CD4-positive, alpha-beta memory T cell (primary cell): ENCODE measurements at regions of chr1 and their contacts with region 1.

Region 1: GRCh38 chr1:207321079-207321789 is at the start of gene CD55:
- DNase-seq: peak; percentile 99 to 100 (median 100)
- H3K4me3 ChIP-seq: peak within 1 kb of the TSS; percentile 98 to 99
- H3K4me3 Mint-ChIP-seq: peak within 1 kb of the TSS; percentile 94 to 99 (median 96)
- H3K27ac ChIP-seq: peak within 1 kb of the TSS; percentile 92
- H3K27ac Mint-ChIP-seq: peak within 1 kb of the TSS; percentile 98 to 100 (median 100)
- H3K4me1 ChIP-seq: peaks cover 44% of the 10 kb centered on the region
- H3K4me1 Mint-ChIP-seq: peaks cover 24 to 56% (median 35%) of the 10 kb centered on the region in 4 donors
- H3K27me3 ChIP-seq: no peaks in the 10 kb centered on the region
- H3K27me3 Mint-ChIP-seq: peaks cover 0 to 5% of the 10 kb centered on the region in 2 donors
- total RNA-seq, gene CD55: 69.0 to 77.3 TPM

Region 2: DNA sequence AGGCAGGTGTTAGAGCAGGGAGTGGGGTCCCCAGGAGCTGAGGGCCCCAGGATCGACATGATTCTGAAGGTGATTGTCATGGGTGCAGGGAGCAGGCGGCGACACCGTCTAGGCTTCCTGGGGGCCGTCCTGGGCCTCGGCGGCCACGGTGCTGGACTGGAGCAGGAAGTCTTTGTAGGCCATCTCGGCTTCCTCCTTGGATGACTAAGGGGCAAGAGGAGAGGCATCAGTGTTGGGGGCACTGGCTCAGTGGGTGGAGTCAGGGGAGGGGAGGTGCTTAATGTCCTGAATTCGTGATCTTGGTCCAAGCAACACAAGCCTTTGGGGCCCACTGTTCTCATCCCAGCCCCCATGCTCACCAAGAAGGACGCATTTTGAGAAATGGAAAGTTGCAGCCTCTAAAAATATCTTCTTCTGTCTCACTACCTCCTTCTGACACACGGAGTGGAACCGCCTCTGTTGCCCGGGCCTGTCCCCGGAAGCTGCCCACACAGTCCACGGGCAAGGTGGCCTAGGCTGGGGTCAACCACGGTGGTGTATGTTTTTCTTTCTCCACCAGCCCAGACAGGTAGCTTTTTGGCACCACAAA is 390.9 kb before region 1 on chr1:
- CTCF ChIA-PET with region 1: no interaction called
- POLR2A ChIA-PET with region 1: no interaction called
- intact Hi-C with region 1: no loop called
- DNase-seq: no peak
- H3K4me3 ChIP-seq: no peak overlapping the region
- H3K4me3 Mint-ChIP-seq: peak overlapping the region; percentile 2 to 70 (median 54)
- H3K27ac ChIP-seq: no peak overlapping the region
- H3K27ac Mint-ChIP-seq: peak overlapping the region; percentile 81 to 93 (median 88)
- H3K4me1 ChIP-seq: peaks cover 39% of the 10 kb centered on the region
- H3K4me1 Mint-ChIP-seq: peaks cover 25 to 55% (median 34%) of the 10 kb centered on the region in 4 donors
- H3K27me3 ChIP-seq: no peaks in the 10 kb centered on the region
- H3K27me3 Mint-ChIP-seq: no peaks in the 10 kb centered on the region

Region 3: GRCh38 chr1:207282058-207282457 is 39.2 kb before region 1 on chr1:
- CTCF ChIA-PET with region 1: interaction called, 3 read pairs
- POLR2A ChIA-PET with region 1: interaction called, 29 read pairs
- intact Hi-C with region 1: no loop called
- DNase-seq: no peak
- H3K4me3 ChIP-seq: no peak overlapping the region
- H3K4me3 Mint-ChIP-seq: peak overlapping the region in 2 of 8 donors; percentile 9 to 27
- H3K27ac ChIP-seq: no peak overlapping the region
- H3K27ac Mint-ChIP-seq: peak overlapping the region in 2 of 7 donors; percentile 11 to 19
- H3K4me1 ChIP-seq: peaks cover 28% of the 10 kb centered on the region
- H3K4me1 Mint-ChIP-seq: peaks cover 21 to 32% (median 24%) of the 10 kb centered on the region in 4 donors
- H3K27me3 ChIP-seq: no peaks in the 10 kb centered on the region
- H3K27me3 Mint-ChIP-seq: peaks cover under 1 to 1% of the 10 kb centered on the region in 2 donors

Region 4: GRCh38 chr1:207309775-207310273 is 11.4 kb before region 1 on chr1:
- CTCF ChIA-PET with region 1: interaction called, 4 read pairs
- POLR2A ChIA-PET with region 1: interaction called, 36 read pairs
- intact Hi-C with region 1: no loop called
- DNase-seq: no peak
- H3K4me3 ChIP-seq: no peak overlapping the region
- H3K4me3 Mint-ChIP-seq: peak overlapping the region in 5 of 8 donors; percentile 1 to 50 (median 26)
- H3K27ac ChIP-seq: no peak overlapping the region
- H3K27ac Mint-ChIP-seq: peak overlapping the region in 5 of 7 donors; percentile 34 to 54 (median 43)
- H3K4me1 ChIP-seq: peaks cover 14% of the 10 kb centered on the region
- H3K4me1 Mint-ChIP-seq: peaks cover 11 to 18% (median 16%) of the 10 kb centered on the region in 4 donors
- H3K27me3 ChIP-seq: no peaks in the 10 kb centered on the region
- H3K27me3 Mint-ChIP-seq: no peaks in the 10 kb centered on the region

Region 5: DNA sequence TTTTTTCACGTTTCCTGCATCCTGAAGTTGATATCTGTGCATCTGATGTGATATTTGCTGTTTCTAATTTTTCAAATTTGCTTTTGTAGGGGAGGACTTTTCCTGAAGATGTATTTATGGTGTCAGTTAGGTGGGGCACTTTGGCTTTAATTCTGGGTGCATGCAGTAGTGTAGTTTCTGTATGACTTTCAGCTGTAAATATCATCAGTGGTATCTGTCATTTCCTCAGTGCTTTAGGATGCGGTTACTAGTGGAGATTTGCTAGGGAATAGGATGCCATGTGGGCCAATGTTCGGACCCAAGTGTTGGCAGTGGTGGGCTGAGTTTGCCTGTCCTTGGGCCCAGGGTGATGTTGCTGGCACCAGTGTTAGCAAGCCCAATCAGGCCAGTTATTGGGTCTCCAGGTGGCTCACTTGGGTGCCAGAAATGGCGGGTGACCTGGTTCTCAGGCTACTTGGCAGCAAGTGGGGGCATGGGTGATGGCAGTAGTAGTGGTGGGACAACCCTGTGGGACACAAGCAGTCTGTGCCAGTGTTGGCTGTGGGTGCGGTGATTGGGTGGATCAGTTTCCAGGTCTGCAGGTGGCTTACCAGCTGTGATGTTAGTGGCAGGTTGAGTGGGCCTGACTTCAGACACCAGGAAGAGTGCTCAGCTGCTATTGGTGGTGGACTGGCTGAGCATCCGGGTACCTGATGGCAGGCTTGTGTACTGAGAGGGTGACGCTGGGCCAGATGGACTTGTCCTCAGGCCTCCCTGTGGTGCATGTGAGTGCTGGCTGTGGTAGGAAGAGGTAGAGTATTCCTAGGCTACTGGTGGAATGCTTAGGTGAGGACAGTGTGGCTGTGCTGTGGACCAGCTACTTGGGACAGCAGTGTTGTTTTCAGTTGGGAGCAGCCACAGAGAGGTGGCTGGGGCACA is 24.7 kb after region 1 on chr1:
- CTCF ChIA-PET with region 1: no interaction called
- POLR2A ChIA-PET with region 1: interaction called, 12 read pairs
- intact Hi-C with region 1: no loop called
- DNase-seq: peak in 1 of 5 donors; percentile 40
- H3K4me3 ChIP-seq: no peak overlapping the region
- H3K4me3 Mint-ChIP-seq: peak overlapping the region in 2 of 8 donors; percentile 14 to 42
- H3K27ac ChIP-seq: no peak overlapping the region
- H3K27ac Mint-ChIP-seq: peak overlapping the region in 4 of 7 donors; percentile 14 to 78 (median 39)
- H3K4me1 ChIP-seq: peaks cover 35% of the 10 kb centered on the region
- H3K4me1 Mint-ChIP-seq: peaks cover 52 to 82% (median 64%) of the 10 kb centered on the region in 4 donors
- H3K27me3 ChIP-seq: no peaks in the 10 kb centered on the region
- H3K27me3 Mint-ChIP-seq: no peaks in the 10 kb centered on the region

Region 6: DNA sequence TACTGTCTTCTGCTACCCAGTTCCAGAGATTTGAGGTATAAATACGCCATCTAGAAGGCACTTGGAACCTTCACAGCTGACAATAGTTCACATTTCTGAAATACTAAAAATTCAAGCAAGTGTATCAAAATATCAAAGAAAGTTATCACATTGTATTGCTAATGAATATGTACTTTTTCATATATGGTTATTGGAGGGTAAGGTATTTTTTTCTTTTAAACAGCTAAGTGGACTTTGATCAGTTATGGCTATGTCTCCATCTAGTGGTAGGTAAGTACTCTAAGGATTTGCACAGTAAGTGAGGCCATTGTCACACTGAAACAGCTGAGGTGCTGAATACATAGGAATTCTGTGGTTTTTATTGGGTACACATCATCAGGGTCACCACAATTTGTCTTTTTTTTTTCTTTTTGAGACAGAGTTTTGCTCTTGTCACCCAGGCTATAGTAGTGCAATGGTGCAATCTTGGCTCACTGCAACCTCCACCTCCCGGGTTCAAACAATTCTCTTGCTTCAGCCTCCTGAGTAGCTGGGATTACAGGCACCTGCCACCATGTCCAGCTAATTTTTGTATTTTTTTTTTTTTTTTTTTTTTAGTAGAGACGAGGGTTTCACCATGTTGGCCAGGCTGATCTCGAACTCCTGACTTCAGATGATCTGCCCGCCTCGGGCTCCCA is 83.8 kb after region 1 on chr1:
- CTCF ChIA-PET with region 1: interaction called, 7 read pairs
- POLR2A ChIA-PET with region 1: interaction called, 14 read pairs
- intact Hi-C with region 1: loop called (anchors 2 kb)
- DNase-seq: peak in 4 of 5 donors; percentile 52 to 63 (median 56)
- H3K4me3 ChIP-seq: no peak overlapping the region
- H3K4me3 Mint-ChIP-seq: no peak overlapping the region
- H3K27ac ChIP-seq: no peak overlapping the region
- H3K27ac Mint-ChIP-seq: no peak overlapping the region
- H3K4me1 ChIP-seq: no peaks in the 10 kb centered on the region
- H3K4me1 Mint-ChIP-seq: no peaks in the 10 kb centered on the region
- H3K27me3 ChIP-seq: no peaks in the 10 kb centered on the region
- H3K27me3 Mint-ChIP-seq: peaks cover 3 to 7% of the 10 kb centered on the region in 2 donors